K562 (cell line): ENCODE measurements at regions of chr4 and their contacts with region 1.

Region 1: DNA sequence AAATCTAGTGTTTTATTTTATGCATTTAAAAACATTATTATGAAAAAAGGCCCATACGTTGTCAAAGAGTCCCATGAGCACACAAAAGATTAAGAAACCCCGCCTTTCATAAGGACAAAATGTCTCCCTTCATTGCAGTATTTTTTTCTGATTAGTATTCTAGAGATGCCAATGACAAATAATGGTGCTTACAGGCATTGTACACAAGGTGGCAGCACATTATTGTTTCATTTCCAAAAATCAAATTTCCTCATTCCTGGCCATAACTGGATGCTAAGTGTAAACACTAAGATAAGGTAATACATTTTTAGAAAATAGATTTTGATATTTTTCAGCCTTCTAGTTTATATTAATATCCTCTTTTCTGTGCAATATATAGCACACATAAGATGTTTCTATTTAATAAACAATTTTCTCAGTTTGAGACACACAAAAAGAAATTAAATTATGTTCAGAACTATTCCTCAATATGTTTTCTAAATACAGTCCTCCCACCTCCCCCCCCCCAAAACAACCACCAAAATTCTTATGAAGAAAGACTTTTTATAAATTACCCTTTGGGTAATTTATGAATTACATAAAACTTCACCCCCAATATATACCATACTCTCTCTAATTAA is 47.7 kb downstream of the TIGD2 start:
- DNase-seq: peak; percentile 22 to 32 (median 24)
- ATAC-seq: peak; percentile 67; the same call in 2 of the 3 replicates
- H3K4me3 ChIP-seq: no peak overlapping the region
- H3K27ac ChIP-seq: no peak overlapping the region
- H3K4me1 ChIP-seq: no peaks in the 10 kb centered on the region
- H3K27me3 ChIP-seq: no peaks in the 10 kb centered on the region
- CTCF ChIP-seq: peak; percentile 35 to 78 (median 56); a peak in 5 of 6 replicates
- EP300 ChIP-seq: no peak
- POLR2A ChIP-seq: no peak
- RAD21 ChIP-seq: peak; percentile 76 to 78

Region 2: DNA sequence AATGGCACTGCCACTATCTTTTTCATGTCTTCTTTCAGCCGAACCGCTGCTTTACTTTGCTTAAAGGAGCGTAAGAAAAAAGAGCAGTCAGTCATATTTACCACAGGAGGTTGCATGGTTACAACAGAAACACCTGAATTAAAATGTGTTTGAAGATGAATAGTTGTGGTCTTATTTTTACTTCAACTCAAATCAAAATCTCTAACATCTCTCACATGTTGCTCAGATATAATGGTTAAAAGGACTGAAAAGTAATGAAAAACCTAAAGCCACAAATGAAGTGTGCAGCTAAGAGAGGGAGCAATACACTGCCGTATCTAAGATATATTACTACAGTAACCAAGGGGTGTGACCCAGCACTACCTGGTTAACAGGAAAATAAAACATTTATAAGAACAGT is 129.4 kb before region 1 on chr4:
- CTCF ChIA-PET with region 1: no interaction called
- POLR2A ChIA-PET with region 1: no interaction called
- in situ Hi-C with region 1: no loop called
- intact Hi-C with region 1: no loop called
- DNase-seq: no peak
- ATAC-seq: no peak
- H3K4me3 ChIP-seq: no peak overlapping the region
- H3K27ac ChIP-seq: no peak overlapping the region
- H3K4me1 ChIP-seq: no peaks in the 10 kb centered on the region
- H3K27me3 ChIP-seq: no peaks in the 10 kb centered on the region
- CTCF ChIP-seq: no peak
- EP300 ChIP-seq: no peak
- POLR2A ChIP-seq: no peak
- RAD21 ChIP-seq: no peak

Region 3: DNA sequence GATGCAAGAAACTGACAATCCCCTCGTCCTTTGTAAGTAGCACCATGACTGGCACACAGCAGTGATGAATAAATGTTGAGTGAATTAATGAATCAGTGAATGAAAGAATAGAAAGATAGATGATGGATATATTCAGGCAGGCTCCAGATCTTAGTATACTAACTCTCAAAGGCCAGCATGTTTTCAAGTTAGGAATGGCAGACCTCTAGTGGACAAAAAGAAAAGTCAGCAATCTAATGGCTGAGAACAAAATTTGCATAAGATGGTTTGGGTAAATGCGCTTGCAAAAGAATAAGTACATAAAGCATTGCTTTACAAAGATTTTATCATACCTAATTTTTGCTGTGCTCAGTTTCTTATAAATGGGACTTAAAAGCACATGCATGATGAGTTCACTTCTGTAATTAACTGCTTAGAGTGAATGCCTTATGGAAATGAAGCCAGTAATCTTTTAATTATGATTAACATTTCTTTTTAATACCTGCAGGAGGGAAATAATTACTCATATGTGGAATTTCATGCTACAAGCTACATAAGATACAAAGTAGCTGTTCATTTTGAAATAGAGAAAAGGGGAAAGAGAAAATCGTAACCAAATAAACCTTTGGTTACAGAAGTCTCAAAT is 275.5 kb after region 1 on chr4:
- CTCF ChIA-PET with region 1: interaction called, 3 read pairs
- POLR2A ChIA-PET with region 1: interaction called, 4 read pairs
- in situ Hi-C with region 1: no loop called
- intact Hi-C with region 1: loop called (anchors 5 kb)
- DNase-seq: peak in 1 of 4 experiments; percentile 5
- ATAC-seq: no peak; the same call in 2 of the 3 replicates
- H3K4me3 ChIP-seq: no peak overlapping the region
- H3K27ac ChIP-seq: no peak overlapping the region
- H3K4me1 ChIP-seq: no peaks in the 10 kb centered on the region
- H3K27me3 ChIP-seq: no peaks in the 10 kb centered on the region
- CTCF ChIP-seq: peak in 2 of 3 experiments; percentile 26 to 51; a peak in 2 of 6 replicates
- EP300 ChIP-seq: no peak
- POLR2A ChIP-seq: no peak
- RAD21 ChIP-seq: peak; percentile 67 to 74